Panc1 (cell line): ENCODE measurements at regions of chr11 and their contacts with region 1.

Region 1: GRCh38 chr11:102085864-102086551 is 24.2 kb upstream of the YAP1 start:
- DNase-seq: peak; percentile 20
- ATAC-seq: peak; percentile 96
- H3K4me3 ChIP-seq: no peak overlapping the region
- H3K27ac ChIP-seq: no peak overlapping the region; the same call in 1 of the 2 replicates
- H3K4me1 ChIP-seq: no peaks in the 10 kb centered on the region
- H3K27me3 ChIP-seq: no peaks in the 10 kb centered on the region
- CTCF ChIP-seq: no peak

Region 2: DNA sequence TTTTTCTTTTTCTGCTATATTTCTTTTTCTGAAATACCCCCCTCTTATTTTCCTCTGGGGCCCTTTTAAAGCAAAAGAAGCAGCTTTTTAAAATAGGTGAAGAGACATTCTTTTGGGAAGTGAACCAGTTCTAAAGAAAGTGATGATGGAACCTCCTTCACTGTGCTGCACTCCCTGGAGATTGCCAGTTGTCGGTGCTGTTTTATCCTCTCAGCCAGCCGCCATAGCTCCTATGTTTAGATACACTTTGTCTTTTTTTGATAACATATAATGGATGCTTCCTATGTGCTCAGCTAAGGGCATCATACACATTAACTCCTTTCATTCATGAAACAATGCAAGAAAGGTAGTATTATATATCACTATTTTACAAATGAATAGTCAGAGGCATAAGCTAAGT is 24.7 kb before region 1 on chr11:
- CTCF ChIA-PET with region 1: no interaction called
- POLR2A ChIA-PET with region 1: interaction called, 10 read pairs
- in situ Hi-C with region 1: no loop called
- intact Hi-C with region 1: no loop called
- DNase-seq: no peak
- ATAC-seq: peak; percentile 82
- H3K4me3 ChIP-seq: no peak overlapping the region
- H3K27ac ChIP-seq: no peak overlapping the region
- H3K4me1 ChIP-seq: no peaks in the 10 kb centered on the region
- H3K27me3 ChIP-seq: no peaks in the 10 kb centered on the region
- CTCF ChIP-seq: peak; percentile 72